ENCODE measurements at regions of chr7 and their contacts with region 1.

Region 1: DNA sequence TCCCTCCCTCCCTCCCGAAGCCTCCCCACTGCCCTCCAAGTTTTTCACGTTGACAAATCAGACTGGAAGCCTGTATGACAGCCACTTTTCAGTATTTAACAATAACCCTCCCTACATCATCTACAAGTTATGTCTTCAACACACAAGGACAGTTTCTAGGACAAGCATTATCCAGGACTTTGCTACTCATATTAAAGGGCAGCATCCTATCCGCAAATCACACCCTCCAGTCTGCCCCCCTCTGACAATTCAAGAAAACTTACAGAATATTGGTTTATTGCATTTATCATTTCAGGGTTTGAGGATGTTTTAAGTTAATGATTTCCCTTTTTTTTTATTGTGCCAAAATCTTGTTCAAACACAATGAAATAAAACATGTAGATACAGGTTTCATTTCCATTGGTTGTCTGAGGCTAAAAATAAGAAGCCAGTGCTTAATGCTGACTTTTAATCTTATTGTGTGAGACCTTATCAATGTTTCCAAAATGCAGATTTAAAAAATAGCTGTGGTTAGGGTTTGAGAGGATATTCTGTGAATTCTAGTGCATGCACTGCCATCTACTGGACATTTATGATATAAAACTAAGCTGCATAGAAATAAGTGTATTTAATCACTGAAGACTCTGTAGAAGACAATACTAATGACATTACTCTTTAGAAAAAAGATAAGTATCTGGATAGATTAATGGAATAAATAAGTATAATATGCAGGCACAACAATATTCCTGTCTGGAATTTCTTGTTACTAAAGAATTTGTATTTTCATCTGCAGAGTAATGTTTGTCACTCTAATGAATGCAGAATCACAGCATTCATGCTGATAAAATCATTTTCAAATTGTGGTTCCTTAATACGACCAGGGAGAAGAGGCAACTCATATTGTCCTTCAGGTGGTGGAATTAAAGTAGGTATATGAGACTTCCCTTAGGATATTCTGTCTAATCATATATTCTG is 64.1 kb downstream of the CAV1 start:
- DNase-seq: peak in 2 of 9 experiments; percentile 54 to 63
- ATAC-seq: no peak
- H3K4me3 ChIP-seq: no peak overlapping the region
- H3K4me3 Mint-ChIP-seq: no peak overlapping the region
- H3K27ac ChIP-seq: no peak overlapping the region
- H3K27ac Mint-ChIP-seq: no peak overlapping the region
- H3K4me1 ChIP-seq: peaks cover 4% of the 10 kb centered on the region
- H3K4me1 Mint-ChIP-seq: peaks cover 16% of the 10 kb centered on the region
- H3K27me3 ChIP-seq: peaks cover 0 to 2% of the 10 kb centered on the region in 2 experiments
- H3K27me3 Mint-ChIP-seq: peaks cover 15% of the 10 kb centered on the region
- CTCF ChIP-seq: peak; percentile 95

Region 2: DNA sequence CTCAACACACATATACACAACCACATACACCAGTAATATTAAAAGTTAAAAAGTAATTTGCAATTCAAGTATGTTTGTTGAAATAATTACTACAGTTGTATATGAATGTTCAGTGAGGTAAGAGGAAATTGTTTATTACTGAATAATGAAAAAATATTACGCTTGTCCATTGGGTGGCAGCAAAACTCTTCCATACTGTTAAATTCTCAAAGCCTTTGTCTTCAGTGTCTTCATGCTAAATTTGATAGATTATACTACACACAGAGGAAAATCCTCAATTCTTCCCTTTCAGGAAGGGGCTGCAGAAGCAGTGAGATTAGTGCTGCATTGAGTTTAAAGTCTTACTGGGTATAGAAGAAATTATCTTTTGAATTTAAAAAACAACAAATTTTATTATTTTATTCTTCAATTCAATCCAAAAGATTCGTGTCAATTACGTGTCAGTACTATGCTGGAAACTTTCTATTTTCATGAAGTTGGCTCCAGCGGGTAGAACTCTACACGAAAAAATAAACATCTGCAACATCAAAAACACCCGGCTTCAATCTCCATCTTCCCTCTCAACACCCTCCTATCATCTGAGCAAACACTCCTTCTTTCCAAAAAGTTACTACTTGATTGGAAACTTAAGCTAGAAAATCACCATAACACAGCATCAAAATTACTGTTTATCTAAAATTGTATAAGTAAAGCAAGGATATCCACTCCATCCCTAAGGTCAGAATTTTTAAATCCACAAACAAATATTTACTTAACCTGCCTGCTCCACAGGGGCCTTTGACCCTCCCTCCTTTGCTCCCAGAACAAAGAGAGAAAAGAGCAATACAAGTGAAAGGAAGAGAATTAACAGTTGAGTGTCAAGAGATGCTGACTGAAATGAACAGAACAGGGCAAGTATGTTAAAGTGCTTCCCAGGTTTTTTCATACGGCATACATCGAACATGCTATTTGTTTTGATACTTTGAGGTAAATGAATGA is 415.6 kb before region 1 on chr7:
- CTCF ChIA-PET with region 1: interaction called, 25 read pairs
- POLR2A ChIA-PET with region 1: interaction called, 3 read pairs
- intact Hi-C with region 1: loop called (anchors 1 kb)
- DNase-seq: peak in 4 of 9 experiments; percentile 16 to 73 (median 58)
- ATAC-seq: peak; percentile 63
- H3K4me3 ChIP-seq: no peak overlapping the region
- H3K4me3 Mint-ChIP-seq: no peak overlapping the region
- H3K27ac ChIP-seq: no peak overlapping the region
- H3K27ac Mint-ChIP-seq: no peak overlapping the region
- H3K4me1 ChIP-seq: no peaks in the 10 kb centered on the region
- H3K4me1 Mint-ChIP-seq: no peaks in the 10 kb centered on the region
- H3K27me3 ChIP-seq: no peaks in the 10 kb centered on the region
- H3K27me3 Mint-ChIP-seq: peaks cover 11% of the 10 kb centered on the region
- CTCF ChIP-seq: peak; percentile 77

Region 3: DNA sequence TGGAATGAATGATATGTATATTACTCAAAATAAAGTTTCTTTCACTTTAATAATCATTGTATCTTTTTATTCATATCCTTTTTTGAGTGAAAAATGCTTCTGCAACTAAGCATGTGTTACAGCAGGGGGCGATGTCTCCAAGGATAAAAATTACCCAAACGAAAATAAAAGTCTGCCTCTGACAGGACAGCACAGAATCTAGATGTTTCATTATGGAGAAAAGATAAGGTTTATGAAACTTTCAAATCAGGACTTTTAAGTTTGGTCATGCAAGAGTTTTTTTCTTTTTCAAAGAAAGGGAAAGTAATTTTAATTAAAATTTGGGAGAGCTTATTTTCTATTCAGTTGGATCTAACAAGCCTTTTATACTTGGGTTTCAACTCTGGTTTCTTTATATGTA is 330.2 kb before region 1 on chr7:
- CTCF ChIA-PET with region 1: interaction called, 5 read pairs
- POLR2A ChIA-PET with region 1: no interaction called
- intact Hi-C with region 1: loop called (anchors 1 to 2 kb)
- DNase-seq: peak in 4 of 9 experiments; percentile 24 to 69 (median 46)
- ATAC-seq: peak; percentile 61
- H3K4me3 ChIP-seq: no peak overlapping the region
- H3K4me3 Mint-ChIP-seq: no peak overlapping the region
- H3K27ac ChIP-seq: peak overlapping the region in 1 of 2 experiments; percentile 1
- H3K27ac Mint-ChIP-seq: no peak overlapping the region
- H3K4me1 ChIP-seq: no peaks in the 10 kb centered on the region
- H3K4me1 Mint-ChIP-seq: peaks cover 10% of the 10 kb centered on the region
- H3K27me3 ChIP-seq: no peaks in the 10 kb centered on the region
- H3K27me3 Mint-ChIP-seq: no peaks in the 10 kb centered on the region
- CTCF ChIP-seq: peak; percentile 89

Region 4: GRCh38 chr7:116601426-116601825 is 12.5 kb after region 1 on chr7:
- CTCF ChIA-PET with region 1: interaction called, 23 read pairs
- POLR2A ChIA-PET with region 1: no interaction called
- intact Hi-C with region 1: no loop called
- DNase-seq: no peak
- ATAC-seq: no peak
- H3K4me3 ChIP-seq: no peak overlapping the region
- H3K4me3 Mint-ChIP-seq: no peak overlapping the region
- H3K27ac ChIP-seq: no peak overlapping the region
- H3K27ac Mint-ChIP-seq: no peak overlapping the region
- H3K4me1 ChIP-seq: no peaks in the 10 kb centered on the region
- H3K4me1 Mint-ChIP-seq: no peaks in the 10 kb centered on the region
- H3K27me3 ChIP-seq: no peaks in the 10 kb centered on the region
- H3K27me3 Mint-ChIP-seq: peaks cover 12% of the 10 kb centered on the region
- CTCF ChIP-seq: no peak

Region 5: DNA sequence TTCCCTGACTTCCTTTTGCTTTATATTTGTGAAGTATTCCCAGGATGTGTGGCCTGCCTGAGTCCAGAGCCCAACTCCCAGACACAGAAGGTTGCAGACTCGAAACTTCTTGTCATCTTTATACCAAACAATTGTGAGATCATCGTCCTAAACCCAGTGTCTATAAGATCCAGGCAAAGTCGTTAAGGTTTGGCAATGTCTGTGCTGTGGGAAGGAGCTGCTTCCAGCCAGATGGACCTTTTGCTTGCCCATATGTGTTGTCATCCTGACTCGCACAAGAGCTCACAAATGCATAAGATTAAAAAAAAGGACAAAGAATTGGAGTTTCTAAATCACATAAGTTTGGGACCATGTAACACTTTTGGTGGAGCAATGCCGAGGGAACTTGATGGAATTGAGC is 696.9 kb after region 1 on chr7:
- CTCF ChIA-PET with region 1: no interaction called
- POLR2A ChIA-PET with region 1: no interaction called
- intact Hi-C with region 1: no loop called
- DNase-seq: no peak
- ATAC-seq: no peak
- H3K4me3 ChIP-seq: no peak overlapping the region
- H3K4me3 Mint-ChIP-seq: no peak overlapping the region
- H3K27ac ChIP-seq: no peak overlapping the region
- H3K27ac Mint-ChIP-seq: no peak overlapping the region
- H3K4me1 ChIP-seq: no peaks in the 10 kb centered on the region
- H3K4me1 Mint-ChIP-seq: no peaks in the 10 kb centered on the region
- H3K27me3 ChIP-seq: no peaks in the 10 kb centered on the region
- H3K27me3 Mint-ChIP-seq: peaks cover 2% of the 10 kb centered on the region
- CTCF ChIP-seq: no peak